Activated T-helper 2 cell treated with anti-CD3 and anti-CD28 coated beads, Interferon-gamma antibody, Interleukin-2, Interleukin-4, amounts not matched to agents 10 μg/mL and 5 μg/mL and 100 μg/mL, durations not matched to agents 14 hours and 24 hours and 36 hours (primary cell): ENCODE measurements at regions of chr12 and their contacts with region 1.

Region 1: DNA sequence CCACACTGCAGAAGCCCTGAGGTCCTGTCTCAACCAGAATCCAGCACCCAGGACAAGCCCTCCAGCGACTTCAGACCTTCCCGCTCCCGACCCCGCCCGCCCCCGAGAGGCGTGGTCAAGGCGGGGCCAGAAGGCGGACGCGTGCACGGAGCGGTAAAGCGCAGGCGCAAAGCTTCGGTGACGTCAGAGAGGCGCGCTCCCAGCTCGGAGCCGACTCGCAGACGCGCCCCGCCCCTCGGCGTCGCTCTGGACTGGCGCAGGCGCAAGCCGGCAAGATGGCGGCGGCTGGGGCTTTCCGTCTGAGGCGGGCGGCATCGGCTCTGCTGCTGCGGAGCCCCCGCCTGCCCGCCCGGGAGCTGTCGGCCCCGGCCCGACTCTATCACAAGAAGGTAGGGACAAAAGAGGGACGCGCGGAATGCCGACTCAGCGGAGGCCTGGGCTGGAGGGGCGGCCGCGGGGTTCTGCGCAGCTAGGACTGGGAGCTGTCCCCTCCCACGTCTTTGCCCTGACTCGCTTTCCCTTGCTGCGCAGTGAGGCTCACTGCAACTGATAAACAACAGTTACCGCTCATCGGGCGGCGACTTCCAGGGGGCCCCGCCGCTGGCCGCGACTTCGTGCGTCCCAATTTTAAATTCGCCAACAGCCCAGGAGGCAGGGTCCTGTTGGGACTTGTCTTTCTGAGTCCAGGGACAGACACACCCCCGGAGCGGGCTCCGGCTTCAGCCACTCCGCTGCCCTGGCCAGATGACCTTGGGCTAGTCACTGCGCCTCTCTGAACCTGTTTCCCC is at the start of gene ISCU:
- DNase-seq: peak; percentile 98
- H3K4me3 Mint-ChIP-seq: peak within 1 kb of the TSS; percentile 100
- H3K27ac Mint-ChIP-seq: peak within 1 kb of the TSS; percentile 100
- H3K4me1 Mint-ChIP-seq: peaks cover 23% of the 10 kb centered on the region
- H3K27me3 Mint-ChIP-seq: no peaks in the 10 kb centered on the region
- total RNA-seq, gene ISCU: 62.9 and 63.5 TPM in 2 replicates

Region 2: DNA sequence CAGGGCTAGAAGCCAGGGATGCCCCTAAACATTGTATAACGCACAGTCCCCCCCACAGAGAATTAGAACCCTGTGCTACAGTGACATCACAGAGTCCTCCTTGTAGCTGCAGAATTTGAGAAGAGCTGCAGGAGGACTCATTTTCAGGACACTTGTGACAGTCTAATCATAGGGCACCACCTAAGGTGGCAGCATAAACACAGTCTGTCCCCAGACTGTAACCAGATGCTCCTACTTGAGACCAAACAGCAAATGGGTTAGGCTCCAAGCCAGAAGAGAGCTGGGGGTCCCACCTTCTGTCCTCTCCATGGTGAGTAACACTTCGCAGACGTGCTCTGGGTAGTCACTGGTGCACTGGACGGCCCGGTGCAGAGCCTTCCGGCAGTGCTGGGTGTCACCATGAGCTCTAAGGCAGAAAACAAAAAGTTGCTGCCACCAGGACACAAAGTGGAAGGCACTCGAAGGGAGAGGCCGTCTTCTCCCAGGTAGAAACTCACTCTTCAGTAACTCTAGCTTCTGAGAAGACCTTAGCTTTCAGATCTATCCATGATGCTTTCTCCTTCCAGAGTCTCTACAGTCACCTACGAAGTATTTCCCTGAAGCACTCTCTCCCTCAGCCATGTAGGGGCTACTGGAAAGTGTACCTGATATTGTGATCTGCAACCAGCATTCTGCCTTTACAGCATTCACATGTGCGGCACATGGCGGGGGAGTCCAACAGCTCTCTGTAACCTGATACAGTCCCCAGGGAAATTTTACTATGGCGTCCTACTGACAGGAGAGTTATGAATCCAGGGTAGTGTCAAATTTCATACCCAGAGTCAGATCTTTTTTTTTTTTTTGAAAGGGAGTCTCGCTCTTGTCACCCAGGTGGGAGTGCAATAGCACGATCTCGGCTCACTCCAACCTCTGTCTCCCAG is 30.4 kb before region 1 on chr12:
- intact Hi-C with region 1: no loop called
- DNase-seq: no peak
- H3K4me3 Mint-ChIP-seq: no peak overlapping the region
- H3K27ac Mint-ChIP-seq: no peak overlapping the region
- H3K4me1 Mint-ChIP-seq: peaks cover 3% of the 10 kb centered on the region
- H3K27me3 Mint-ChIP-seq: no peaks in the 10 kb centered on the region

Region 3: DNA sequence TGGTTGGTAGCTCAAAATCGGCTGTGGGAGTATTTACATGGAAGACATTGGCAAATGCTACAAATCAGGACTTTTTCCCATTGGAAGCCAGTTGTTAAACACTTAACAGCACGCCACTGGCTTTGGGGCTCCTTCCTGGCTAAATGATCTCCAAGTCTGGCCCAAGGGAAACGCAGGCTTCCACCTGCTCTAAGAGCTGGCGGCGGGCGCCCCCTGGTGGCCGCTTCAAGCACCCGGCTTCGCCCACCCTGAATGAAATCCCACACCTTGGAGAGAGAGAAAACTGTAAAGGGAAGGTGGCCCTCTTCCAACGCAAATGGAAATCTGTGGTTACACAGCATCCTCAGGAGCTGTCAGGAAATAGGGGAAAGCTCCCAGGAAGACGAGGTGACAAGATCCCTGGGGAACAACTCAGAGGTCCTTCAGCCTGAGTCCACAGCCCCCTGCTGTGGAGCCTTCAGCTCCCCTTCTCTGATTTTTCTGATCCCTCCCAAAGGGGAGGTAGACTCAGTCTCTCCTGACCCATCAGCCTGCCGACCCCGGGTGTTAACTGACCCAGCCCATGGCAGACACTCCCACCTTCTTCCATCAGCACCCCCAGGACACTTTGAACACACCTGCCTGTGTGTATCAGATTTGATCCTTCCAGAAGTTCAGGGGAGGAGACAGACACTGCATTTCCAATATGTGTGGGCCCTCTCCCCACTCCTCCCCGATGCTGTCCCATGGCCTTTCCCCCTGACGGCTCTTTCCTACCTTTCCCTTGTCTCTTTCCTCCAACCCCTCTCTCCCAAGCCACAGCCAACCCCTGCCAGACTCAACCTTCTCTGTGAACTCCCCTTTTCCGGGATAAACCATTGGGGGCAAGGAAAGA is 55.8 kb after region 1 on chr12:
- intact Hi-C with region 1: loop called (anchors 1 kb)
- DNase-seq: peak; percentile 60
- H3K4me3 Mint-ChIP-seq: no peak overlapping the region
- H3K27ac Mint-ChIP-seq: peak overlapping the region; percentile 43
- H3K4me1 Mint-ChIP-seq: peaks cover 30% of the 10 kb centered on the region
- H3K27me3 Mint-ChIP-seq: no peaks in the 10 kb centered on the region

Region 4: GRCh38 chr12:108664338-108665258 is 102.1 kb after region 1 on chr12:
- intact Hi-C with region 1: loop called (anchors 1 kb)
- DNase-seq: peak; percentile 75
- H3K4me3 Mint-ChIP-seq: no peak overlapping the region
- H3K27ac Mint-ChIP-seq: peak overlapping the region; percentile 85
- H3K4me1 Mint-ChIP-seq: peaks cover 24% of the 10 kb centered on the region
- H3K27me3 Mint-ChIP-seq: no peaks in the 10 kb centered on the region

Region 5: DNA sequence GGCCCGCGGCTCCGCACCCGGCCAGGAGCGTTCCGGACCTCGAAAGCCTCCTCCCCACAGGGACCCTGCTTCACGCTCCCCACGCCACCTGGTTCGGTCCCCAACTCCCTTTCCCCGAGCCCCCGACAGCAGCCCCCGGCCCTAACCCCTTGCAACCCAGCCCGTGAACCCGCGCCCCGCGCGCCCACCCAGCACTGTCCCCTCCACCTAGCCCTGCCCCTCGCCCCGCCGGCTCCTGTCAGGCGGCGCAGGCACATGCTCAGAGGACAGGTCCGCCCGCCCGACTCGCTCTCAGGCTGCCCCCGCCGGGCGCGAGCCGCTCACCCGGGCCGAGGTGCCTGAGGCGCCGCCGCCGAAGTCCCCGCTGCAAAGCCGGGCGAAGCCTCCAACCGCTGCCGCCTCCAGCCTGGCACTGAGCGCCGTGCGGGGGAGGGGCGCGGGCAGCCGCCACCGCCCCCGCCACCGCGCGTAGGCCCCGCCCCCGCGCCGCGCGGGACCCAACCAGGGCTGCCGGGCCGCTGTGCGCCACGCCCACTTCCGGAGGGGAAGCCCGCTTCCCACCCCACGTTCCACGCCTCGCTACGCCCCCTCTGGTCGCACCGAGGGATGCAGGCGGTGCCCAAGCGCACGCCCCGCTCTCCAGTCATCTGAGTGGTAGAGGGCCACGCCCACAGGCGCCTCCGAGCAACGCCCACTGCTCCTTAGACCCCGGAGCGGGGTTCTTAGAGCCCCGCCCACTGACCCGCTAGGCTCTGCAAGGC is 168.7 kb after region 1 on chr12 and contains the start of gene CORO1C:
- intact Hi-C with region 1: loop called (anchors 2 kb)
- DNase-seq: peak; percentile 96
- H3K4me3 Mint-ChIP-seq: peak within 1 kb of the TSS; percentile 87
- H3K27ac Mint-ChIP-seq: peak within 1 kb of the TSS; percentile 87
- H3K4me1 Mint-ChIP-seq: peaks cover 42% of the 10 kb centered on the region
- H3K27me3 Mint-ChIP-seq: peaks cover 4% of the 10 kb centered on the region
- total RNA-seq, gene CORO1C: 81.5 and 88.8 TPM in 2 replicates

Region 6: DNA sequence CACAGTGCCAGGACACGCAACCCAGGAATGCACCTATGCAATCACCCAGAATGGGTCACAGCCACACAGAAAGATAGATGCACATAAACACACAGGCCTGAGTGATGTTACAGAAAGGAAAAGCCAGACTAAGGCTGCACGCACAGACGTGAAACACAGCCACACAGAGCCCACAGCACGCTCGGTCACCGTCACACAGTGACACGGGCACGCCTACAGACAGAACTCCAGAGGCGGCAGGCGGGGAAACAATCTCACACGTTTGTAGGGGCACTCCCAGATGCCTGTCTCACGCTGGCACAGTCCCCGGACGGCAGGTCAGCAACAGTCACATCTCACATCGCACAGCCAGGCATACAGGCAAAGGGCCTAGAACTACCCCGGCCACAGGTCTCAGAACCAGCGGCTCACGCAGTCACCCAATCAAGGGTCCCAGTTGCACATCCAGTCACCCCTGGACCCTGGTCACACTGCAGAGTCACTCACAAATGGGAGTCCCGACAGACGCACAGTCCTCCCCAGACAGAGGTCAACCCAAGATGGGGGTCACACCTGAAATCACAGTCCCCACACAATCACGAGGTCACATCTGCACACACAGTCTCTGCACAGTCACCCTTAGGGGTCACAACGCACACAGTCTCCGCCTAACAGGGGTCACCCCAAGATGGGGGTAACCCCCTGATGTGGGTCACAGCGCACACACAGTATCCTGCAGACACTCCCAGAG is 294.1 kb after region 1 on chr12:
- intact Hi-C with region 1: loop called (anchors 2 kb)
- DNase-seq: peak; percentile 40
- H3K4me3 Mint-ChIP-seq: peak overlapping the region; percentile 83
- H3K27ac Mint-ChIP-seq: peak overlapping the region; percentile 84
- H3K4me1 Mint-ChIP-seq: peaks cover 56% of the 10 kb centered on the region
- H3K27me3 Mint-ChIP-seq: no peaks in the 10 kb centered on the region

Region 7: DNA sequence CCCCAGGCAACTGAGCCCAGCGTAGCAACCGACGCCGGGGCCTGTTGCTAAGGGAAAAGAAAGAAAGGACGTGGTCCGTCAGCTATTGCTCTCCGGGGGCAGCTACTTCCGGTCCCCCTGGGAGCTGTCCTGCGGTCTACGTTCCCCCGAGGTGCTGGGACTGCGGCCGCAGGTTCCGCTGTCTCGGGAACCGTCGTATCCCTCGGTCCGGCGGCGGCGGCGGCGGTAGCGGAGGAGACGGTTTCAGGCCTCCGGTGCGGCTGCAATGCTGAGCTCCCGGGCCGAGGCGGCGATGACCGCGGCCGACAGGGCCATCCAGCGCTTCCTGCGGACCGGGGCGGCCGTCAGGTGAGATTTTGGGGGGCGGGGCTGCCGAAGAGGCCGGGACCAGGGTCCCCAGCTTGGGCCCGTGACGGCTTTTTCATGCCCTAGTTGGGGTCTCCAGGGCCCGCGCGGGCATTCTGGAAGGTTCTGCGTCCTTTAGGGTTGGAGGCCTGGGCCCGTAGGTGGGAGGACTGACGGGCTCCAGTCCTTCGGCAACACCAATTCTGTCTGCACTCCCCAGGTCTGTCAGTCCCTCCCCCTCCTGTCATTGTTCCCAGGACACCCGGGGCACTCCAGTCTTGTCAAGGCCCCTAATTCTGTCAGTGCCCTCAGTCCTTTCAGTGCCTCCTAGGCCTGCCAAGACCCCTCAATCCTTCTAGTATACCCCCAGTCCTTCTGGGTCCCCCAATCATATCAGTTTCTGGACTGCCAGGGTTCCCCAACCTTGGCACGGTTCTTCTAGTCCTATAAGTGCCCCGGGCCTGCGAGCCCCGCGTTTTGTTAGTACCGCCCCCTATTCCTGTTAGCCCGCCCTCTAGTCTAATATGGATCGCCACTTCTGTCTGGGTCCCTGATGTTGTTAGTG is 490.1 kb after region 1 on chr12 and contains the start of gene USP30:
- intact Hi-C with region 1: loop called (anchors 5 kb)
- DNase-seq: peak; percentile 80
- H3K4me3 Mint-ChIP-seq: peak within 1 kb of the TSS; percentile 96
- H3K27ac Mint-ChIP-seq: peak within 1 kb of the TSS; percentile 98
- H3K4me1 Mint-ChIP-seq: peaks cover 11% of the 10 kb centered on the region
- H3K27me3 Mint-ChIP-seq: no peaks in the 10 kb centered on the region
- total RNA-seq, gene USP30: 6.8 and 7.3 TPM in 2 replicates